Activated CD8-positive, alpha-beta T cell treated with anti-CD3 and anti-CD28 coated beads for 36 hours (primary cell): ENCODE measurements at regions of chr17 and their contacts with region 1.

Region 1: DNA sequence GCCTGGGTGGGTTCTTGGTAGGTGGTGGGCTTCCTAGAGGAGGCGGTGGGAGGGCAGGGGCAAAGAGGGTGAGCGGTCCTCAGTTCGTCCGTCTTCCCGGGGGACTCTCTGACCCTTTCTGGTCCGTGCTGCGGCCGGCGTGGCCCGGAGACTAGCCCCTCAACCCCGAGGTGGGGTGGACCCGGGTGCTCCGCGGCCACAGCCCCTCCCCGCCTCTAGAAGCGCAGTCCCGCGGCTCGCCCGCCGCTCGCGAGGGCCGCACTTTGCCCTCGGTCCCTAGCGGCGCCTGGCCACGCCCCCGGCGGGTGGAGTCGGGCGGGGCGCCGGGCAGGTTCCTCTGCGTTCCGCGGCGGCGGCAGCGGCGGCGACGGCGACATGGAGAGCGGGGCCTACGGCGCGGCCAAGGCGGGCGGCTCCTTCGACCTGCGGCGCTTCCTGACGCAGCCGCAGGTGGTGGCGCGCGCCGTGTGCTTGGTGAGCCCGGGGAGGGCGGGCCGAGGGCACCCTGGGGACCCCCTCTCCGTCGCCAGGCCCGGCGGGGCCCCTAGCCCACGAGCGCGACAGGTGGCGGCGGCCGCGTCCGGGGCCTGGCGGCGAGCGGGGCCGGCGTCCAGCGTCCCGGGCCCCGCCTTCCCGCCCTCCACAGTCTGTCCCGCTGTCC is at the start of gene SYNGR2:
- DNase-seq: peak; percentile 86
- ATAC-seq: peak; percentile 82
- H3K4me3 Mint-ChIP-seq: peak within 1 kb of the TSS; percentile 77
- H3K27ac Mint-ChIP-seq: peak within 1 kb of the TSS; percentile 79
- H3K4me1 Mint-ChIP-seq: peaks cover 41% of the 10 kb centered on the region
- H3K27me3 Mint-ChIP-seq: no peaks in the 10 kb centered on the region
- CTCF ChIP-seq: no peak
- total RNA-seq, gene SYNGR2: 92.6 to 95.1 TPM

Region 2: DNA sequence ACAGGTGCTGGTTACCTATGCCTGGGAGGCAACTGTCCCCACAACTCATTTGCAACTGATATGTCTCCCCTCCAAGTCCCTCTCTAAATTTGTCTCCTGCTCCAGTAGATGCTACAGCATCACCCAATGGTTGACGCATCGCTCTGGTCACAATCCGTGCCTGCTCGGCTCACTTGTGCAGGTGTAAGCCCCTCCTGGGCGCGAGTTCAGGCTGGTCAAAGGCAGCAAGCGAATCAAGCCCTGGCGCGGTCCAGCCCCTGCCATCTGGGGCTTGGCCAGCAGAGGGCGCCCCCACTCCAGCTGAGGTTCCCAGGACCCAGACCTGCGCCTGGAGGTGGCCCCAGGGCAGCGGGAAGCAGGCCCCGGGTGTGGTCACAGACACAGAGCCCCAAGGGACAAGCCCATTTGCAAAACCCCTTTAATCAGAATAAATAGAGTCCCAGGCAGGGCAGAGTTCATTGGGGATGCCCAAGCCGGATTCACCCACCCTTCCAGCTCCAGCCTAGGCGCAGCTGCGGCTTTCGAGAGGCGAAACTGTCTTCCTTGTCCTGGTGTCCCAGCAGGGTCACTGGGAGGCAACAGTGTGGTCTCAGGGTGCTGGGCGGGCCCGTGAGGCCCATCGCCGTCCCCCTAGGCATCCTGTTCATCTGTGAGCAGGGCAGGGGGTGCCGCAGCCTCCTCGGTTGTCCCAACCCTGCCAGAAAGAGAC is 55.7 kb before region 1 on chr17:
- CTCF ChIA-PET with region 1: interaction called, 7 read pairs
- POLR2A ChIA-PET with region 1: interaction called, 5 read pairs
- intact Hi-C with region 1: loop called (anchors 5 kb)
- DNase-seq: peak; percentile 85
- ATAC-seq: peak; percentile 65
- H3K4me3 Mint-ChIP-seq: no peak overlapping the region
- H3K27ac Mint-ChIP-seq: peak overlapping the region; percentile 80
- H3K4me1 Mint-ChIP-seq: peaks cover 44% of the 10 kb centered on the region
- H3K27me3 Mint-ChIP-seq: no peaks in the 10 kb centered on the region
- CTCF ChIP-seq: peak; percentile 99

Region 3: DNA sequence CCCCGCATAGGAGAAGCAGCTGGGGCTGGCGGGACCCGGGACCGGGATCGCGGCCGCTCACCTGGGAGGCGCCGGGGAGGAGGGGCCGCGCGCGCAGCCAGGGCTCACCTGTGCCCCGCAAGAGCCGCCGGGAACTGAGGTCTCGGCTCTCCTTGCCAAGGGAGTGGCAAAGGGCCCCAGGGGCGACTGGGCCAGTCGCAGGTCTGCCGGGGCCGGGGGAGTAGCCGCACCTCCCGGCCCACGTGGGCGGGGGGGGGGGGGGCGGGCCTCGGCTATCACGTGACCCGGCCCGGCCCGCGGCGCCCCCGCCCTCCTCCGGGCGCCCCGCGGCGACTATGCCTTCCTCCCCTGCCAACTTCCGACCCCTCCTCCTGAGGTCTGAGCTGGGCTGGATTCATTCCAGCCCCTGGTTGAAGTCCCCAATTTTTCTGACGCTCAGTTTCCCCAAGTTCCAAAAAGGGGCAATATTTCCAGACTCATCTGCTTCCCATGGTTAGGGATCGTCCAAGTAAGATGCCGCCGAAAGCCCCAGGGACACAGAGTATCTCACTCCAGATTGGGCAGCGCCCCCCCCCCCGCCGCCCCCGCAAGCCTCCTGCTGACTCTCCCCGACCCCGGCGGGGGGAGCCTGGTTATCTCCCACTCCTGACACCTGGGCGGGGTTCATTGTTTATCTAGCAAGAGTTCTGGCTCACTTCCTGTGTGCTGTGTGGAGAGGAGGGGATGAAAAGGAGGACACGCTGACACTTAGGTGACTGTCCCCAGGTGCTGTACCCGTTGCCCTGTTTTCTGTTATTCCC is 39.6 kb before region 1 on chr17 and contains the start of gene TMC6:
- CTCF ChIA-PET with region 1: interaction called, 3 read pairs
- POLR2A ChIA-PET with region 1: interaction called, 21 read pairs
- intact Hi-C with region 1: no loop called
- DNase-seq: peak; percentile 90
- ATAC-seq: peak; percentile 22
- H3K4me3 Mint-ChIP-seq: peak within 1 kb of the TSS; percentile 78
- H3K27ac Mint-ChIP-seq: peak within 1 kb of the TSS; percentile 97
- H3K4me1 Mint-ChIP-seq: peaks cover 38% of the 10 kb centered on the region
- H3K27me3 Mint-ChIP-seq: no peaks in the 10 kb centered on the region
- CTCF ChIP-seq: no peak
- total RNA-seq, gene TMC6: 209 to 213 TPM

Region 4: DNA sequence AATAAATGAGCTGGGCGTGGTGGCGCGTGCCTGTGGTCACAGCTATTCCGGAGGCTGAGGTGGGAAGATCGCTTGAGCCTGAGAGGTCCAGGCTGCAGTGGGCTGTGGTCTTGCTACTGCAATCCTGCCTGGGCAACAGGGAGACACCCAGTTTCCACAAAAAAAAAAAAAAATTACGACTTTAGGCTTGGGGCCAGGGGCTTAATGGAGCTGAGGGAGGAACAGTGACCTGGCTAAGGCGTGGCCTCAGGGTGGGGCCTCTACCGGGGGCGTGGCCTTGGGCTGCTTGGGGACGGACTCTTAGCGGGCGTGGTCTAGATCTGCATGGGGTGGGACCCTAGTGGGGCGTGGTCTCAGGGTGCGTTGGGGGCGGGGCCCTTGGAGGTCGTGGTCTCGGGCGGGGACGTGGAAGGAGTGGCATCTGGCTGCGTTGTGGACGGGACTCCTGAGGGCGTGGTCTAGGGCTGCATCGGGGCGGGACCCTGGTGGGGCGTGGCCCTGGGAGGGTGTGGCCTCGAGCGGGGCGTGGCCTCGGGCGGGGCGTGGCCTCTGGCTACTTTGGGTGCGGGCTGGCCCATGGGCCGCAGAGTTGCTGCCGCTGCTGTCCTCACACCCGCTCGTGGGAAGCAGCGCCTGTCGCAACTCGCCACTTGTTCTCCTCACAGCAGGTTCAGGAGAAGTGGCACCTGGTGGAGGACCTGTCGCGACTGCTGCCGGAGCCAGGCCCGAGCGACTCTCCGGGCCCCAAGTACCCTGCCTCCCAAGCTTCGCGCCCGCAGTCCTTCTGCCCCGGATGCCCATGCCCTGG is 28.0 kb before region 1 on chr17:
- CTCF ChIA-PET with region 1: interaction called, 4 read pairs
- POLR2A ChIA-PET with region 1: interaction called, 33 read pairs
- intact Hi-C with region 1: no loop called
- DNase-seq: peak; percentile 100
- ATAC-seq: peak; percentile 91
- H3K4me3 Mint-ChIP-seq: peak overlapping the region; percentile 28
- H3K27ac Mint-ChIP-seq: peak overlapping the region; percentile 85
- H3K4me1 Mint-ChIP-seq: peaks cover 67% of the 10 kb centered on the region
- H3K27me3 Mint-ChIP-seq: no peaks in the 10 kb centered on the region
- CTCF ChIP-seq: no peak

Region 5: DNA sequence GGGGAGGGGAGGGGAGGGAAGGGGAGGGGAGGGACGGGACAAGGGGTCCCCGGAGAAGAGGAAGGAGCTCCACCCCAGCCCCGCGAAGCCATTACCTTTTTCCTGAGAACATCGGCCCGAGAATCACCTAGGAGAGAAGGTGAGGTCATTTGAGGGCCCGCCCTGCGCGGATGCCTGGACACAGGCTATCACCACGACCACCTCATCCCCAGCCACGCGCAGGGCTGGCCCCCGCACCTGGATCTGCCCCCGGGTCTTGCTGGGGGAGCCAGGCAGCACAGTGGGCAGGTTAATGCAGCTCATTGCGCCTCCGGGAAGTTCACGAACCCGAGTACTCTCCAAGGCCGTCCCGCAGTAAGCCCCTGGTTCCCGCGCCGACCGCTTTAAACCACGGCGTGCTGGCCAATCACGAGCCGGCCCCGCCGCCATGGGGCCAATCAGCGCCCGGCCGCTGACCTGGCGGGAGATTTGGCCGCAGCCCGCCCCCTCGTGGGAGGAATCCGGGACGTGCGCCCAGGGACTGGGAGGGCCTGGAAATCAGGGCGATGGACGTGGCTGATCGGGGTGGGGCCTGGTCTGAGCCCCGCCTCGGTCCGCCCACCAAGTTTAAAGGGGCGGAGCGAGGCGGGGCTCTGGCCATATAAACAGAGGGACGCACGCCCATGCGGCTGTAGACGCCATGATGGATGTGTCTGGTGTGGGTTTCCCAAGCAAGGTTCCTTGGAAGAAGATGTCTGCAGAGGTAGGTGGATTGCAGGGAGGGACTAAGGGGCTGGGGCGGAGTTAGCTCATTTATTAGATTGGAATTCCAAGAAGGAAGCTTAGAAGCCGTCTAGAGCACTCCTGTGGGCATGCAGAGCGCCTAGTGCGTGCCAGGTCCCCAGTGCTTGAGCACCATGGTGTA is 18.6 kb after region 1 on chr17 and contains the starts of genes AFMID and TK1:
- CTCF ChIA-PET with region 1: interaction called, 3 read pairs
- POLR2A ChIA-PET with region 1: interaction called, 100 read pairs
- intact Hi-C with region 1: no loop called
- DNase-seq: peak; percentile 96
- ATAC-seq: peak; percentile 98
- H3K4me3 Mint-ChIP-seq: peak within 1 kb of the TSS; percentile 93
- H3K27ac Mint-ChIP-seq: peak within 1 kb of the TSS; percentile 82
- H3K4me1 Mint-ChIP-seq: peaks cover 32% of the 10 kb centered on the region
- H3K27me3 Mint-ChIP-seq: no peaks in the 10 kb centered on the region
- CTCF ChIP-seq: no peak
- total RNA-seq, gene AFMID: 20.8 to 27.9 TPM
- total RNA-seq, gene TK1: 175 to 179 TPM

Region 6: GRCh38 chr17:78450696-78451345 is 282.4 kb after region 1 on chr17:
- CTCF ChIA-PET with region 1: no interaction called
- POLR2A ChIA-PET with region 1: no interaction called
- intact Hi-C with region 1: no loop called
- DNase-seq: no peak
- ATAC-seq: no peak
- H3K4me3 Mint-ChIP-seq: no peak overlapping the region
- H3K27ac Mint-ChIP-seq: no peak overlapping the region
- H3K4me1 Mint-ChIP-seq: no peaks in the 10 kb centered on the region
- H3K27me3 Mint-ChIP-seq: no peaks in the 10 kb centered on the region
- CTCF ChIP-seq: no peak